Caco-2 (cell line): ENCODE measurements at regions of chrX and their contacts with region 1.

Region 1: DNA sequence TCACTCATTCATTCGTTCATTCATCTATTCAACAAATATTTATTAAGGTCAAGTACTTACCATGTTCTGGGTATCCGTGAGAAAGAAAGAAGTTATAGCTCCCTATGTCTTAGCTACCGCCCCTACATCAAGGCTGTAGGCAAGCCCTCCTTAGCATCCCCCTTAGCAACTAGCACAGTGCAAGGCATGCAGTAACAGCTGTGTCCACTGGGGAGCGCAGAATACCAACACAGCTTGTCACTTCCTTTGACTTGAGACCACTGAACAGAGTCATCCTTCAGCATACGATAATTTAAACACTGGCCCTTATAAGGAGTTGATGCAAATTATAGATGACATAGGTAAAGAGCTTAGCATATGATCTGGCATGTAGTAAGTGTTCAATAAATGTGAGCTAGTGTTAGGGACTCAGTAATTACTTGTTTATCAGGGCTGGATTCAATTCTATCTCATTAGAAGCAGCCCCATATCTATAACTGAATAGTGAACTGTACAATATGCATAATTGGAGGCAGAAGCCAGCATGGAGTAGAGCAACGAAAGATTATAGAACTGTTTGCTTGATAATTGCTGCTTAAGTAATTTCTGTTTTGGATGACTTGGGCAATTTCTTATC is 8.7 kb downstream of the KIAA1210 start:
- DNase-seq: peak; percentile 42 to 46
- H3K4me3 ChIP-seq: no peak overlapping the region
- H3K4me3 Mint-ChIP-seq: no peak overlapping the region
- H3K27ac Mint-ChIP-seq: no peak overlapping the region
- H3K4me1 ChIP-seq: no peaks in the 10 kb centered on the region
- H3K4me1 Mint-ChIP-seq: no peaks in the 10 kb centered on the region
- H3K27me3 ChIP-seq: no peaks in the 10 kb centered on the region
- H3K27me3 Mint-ChIP-seq: peaks cover 3% of the 10 kb centered on the region
- CTCF ChIP-seq: peak in 1 of 2 experiments; percentile 65

Region 2: GRCh38 chrX:118974088-118974907 is 144.6 kb before region 1 on chrX and contains the start of gene LONRF3:
- CTCF ChIA-PET with region 1: no interaction called
- POLR2A ChIA-PET with region 1: no interaction called
- intact Hi-C with region 1: no loop called
- DNase-seq: peak; percentile 30 to 36
- H3K4me3 ChIP-seq: peak within 1 kb of the TSS; percentile 40
- H3K4me3 Mint-ChIP-seq: peak within 1 kb of the TSS; percentile 87
- H3K27ac Mint-ChIP-seq: no peak within 1 kb of the TSS
- H3K4me1 ChIP-seq: no peaks in the 10 kb centered on the region
- H3K4me1 Mint-ChIP-seq: no peaks in the 10 kb centered on the region
- H3K27me3 ChIP-seq: no peaks in the 10 kb centered on the region; the same call in none of the 2 replicates
- H3K27me3 Mint-ChIP-seq: peaks cover 8% of the 10 kb centered on the region
- CTCF ChIP-seq: no peak
- total RNA-seq, gene LONRF3: 0.65 and 0.84 TPM in 2 replicates

Region 3: GRCh38 chrX:119062750-119063374 is 56.0 kb before region 1 on chrX:
- CTCF ChIA-PET with region 1: no interaction called
- POLR2A ChIA-PET with region 1: no interaction called
- intact Hi-C with region 1: no loop called
- DNase-seq: no peak
- H3K4me3 ChIP-seq: no peak overlapping the region
- H3K4me3 Mint-ChIP-seq: no peak overlapping the region
- H3K27ac Mint-ChIP-seq: no peak overlapping the region
- H3K4me1 ChIP-seq: no peaks in the 10 kb centered on the region
- H3K4me1 Mint-ChIP-seq: no peaks in the 10 kb centered on the region
- H3K27me3 ChIP-seq: no peaks in the 10 kb centered on the region
- H3K27me3 Mint-ChIP-seq: peaks cover 2% of the 10 kb centered on the region
- CTCF ChIP-seq: no peak

Region 4: DNA sequence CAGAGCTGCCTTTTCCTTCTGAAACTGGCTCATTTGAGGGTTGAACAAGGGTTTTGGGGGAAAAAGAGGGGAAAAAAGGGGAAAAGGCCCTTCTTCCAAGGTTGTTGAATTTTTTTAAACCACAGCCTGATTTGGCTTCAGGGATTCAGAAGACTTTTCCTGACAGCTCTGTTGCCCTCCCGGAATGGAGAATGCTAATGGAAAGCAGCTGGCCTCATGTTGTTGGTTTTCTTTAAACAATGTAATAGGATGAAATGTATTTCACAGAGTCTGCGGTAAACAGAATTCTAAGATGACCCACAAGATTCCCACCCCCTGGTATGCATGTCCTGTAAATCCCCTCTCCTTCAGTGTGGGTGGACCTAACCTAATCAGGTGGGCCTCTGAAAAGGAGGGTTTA is 12.0 kb after region 1 on chrX:
- CTCF ChIA-PET with region 1: no interaction called
- POLR2A ChIA-PET with region 1: no interaction called
- intact Hi-C with region 1: no loop called
- DNase-seq: no peak
- H3K4me3 ChIP-seq: no peak overlapping the region
- H3K4me3 Mint-ChIP-seq: no peak overlapping the region
- H3K27ac Mint-ChIP-seq: no peak overlapping the region
- H3K4me1 ChIP-seq: no peaks in the 10 kb centered on the region
- H3K4me1 Mint-ChIP-seq: peaks cover 7% of the 10 kb centered on the region
- H3K27me3 ChIP-seq: no peaks in the 10 kb centered on the region
- H3K27me3 Mint-ChIP-seq: peaks cover 10% of the 10 kb centered on the region
- CTCF ChIP-seq: no peak

Region 5: DNA sequence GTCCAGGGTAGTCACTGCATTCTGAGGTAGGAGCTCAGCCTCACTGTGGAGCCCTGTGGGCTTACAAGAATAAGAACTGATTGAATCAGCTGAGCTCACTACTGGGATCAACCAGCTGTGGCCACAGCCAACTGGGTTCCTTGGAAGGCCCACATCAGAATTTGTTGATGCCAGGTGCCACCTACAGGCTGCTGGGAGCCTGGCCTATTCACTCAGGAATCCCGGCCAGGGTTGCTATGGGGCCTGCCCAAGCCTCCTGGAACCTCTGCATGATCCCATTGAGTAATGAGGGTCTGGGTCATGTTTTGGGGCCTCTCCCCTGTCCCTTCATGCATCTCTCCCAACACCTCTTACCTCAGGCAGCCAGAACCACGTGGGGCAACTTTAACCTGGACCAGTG is 62.6 kb after region 1 on chrX:
- CTCF ChIA-PET with region 1: interaction called, 3 read pairs
- POLR2A ChIA-PET with region 1: no interaction called
- intact Hi-C with region 1: loop called (anchors 2 kb)
- DNase-seq: peak; percentile 34 to 36
- H3K4me3 ChIP-seq: no peak overlapping the region
- H3K4me3 Mint-ChIP-seq: no peak overlapping the region
- H3K27ac Mint-ChIP-seq: no peak overlapping the region
- H3K4me1 ChIP-seq: no peaks in the 10 kb centered on the region
- H3K4me1 Mint-ChIP-seq: no peaks in the 10 kb centered on the region
- H3K27me3 ChIP-seq: no peaks in the 10 kb centered on the region
- H3K27me3 Mint-ChIP-seq: peaks cover 8% of the 10 kb centered on the region
- CTCF ChIP-seq: peak; percentile 23 to 52

Region 6: GRCh38 chrX:119194621-119195020 is 75.7 kb after region 1 on chrX:
- CTCF ChIA-PET with region 1: interaction called, 3 read pairs
- POLR2A ChIA-PET with region 1: no interaction called
- intact Hi-C with region 1: loop called (anchors 1 kb)
- DNase-seq: no peak
- H3K4me3 ChIP-seq: no peak overlapping the region
- H3K4me3 Mint-ChIP-seq: no peak overlapping the region
- H3K27ac Mint-ChIP-seq: no peak overlapping the region
- H3K4me1 ChIP-seq: no peaks in the 10 kb centered on the region
- H3K4me1 Mint-ChIP-seq: no peaks in the 10 kb centered on the region
- H3K27me3 ChIP-seq: no peaks in the 10 kb centered on the region
- H3K27me3 Mint-ChIP-seq: peaks cover 9% of the 10 kb centered on the region
- CTCF ChIP-seq: peak; percentile 21 to 26

Region 7: DNA sequence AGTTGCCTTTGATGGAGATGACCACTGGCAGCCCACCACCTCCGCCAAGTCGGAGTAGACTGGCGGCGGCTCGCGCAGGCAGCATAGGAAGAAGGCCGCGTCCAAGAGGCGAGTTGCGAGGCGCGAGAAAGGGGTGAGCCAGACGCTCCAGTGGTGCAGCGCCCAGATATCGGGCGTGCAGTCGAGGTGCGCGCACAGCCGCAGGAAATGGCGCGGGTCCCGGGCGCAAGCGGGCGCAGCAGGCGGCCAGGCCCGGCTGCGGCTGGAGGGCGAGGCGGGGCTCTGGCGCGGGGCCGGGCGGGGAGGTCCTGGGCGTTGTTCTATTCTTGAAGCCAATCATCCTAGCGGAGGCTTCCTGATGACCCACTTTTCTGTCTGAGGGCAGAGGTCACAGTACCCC is 104.0 kb after region 1 on chrX:
- CTCF ChIA-PET with region 1: no interaction called
- POLR2A ChIA-PET with region 1: no interaction called
- intact Hi-C with region 1: loop called (anchors 1 kb)
- DNase-seq: no peak
- H3K4me3 ChIP-seq: no peak overlapping the region
- H3K4me3 Mint-ChIP-seq: no peak overlapping the region
- H3K27ac Mint-ChIP-seq: no peak overlapping the region
- H3K4me1 ChIP-seq: no peaks in the 10 kb centered on the region
- H3K4me1 Mint-ChIP-seq: peaks cover 7% of the 10 kb centered on the region
- H3K27me3 ChIP-seq: no peaks in the 10 kb centered on the region
- H3K27me3 Mint-ChIP-seq: peaks cover 15% of the 10 kb centered on the region
- CTCF ChIP-seq: no peak

Region 8: GRCh38 chrX:119266364-119266995 is 147.6 kb after region 1 on chrX:
- CTCF ChIA-PET with region 1: no interaction called
- POLR2A ChIA-PET with region 1: no interaction called
- intact Hi-C with region 1: loop called (anchors 2 kb)
- DNase-seq: peak in 1 of 2 experiments; percentile 4
- H3K4me3 ChIP-seq: no peak overlapping the region
- H3K4me3 Mint-ChIP-seq: no peak overlapping the region
- H3K27ac Mint-ChIP-seq: no peak overlapping the region
- H3K4me1 ChIP-seq: no peaks in the 10 kb centered on the region
- H3K4me1 Mint-ChIP-seq: no peaks in the 10 kb centered on the region
- H3K27me3 ChIP-seq: no peaks in the 10 kb centered on the region
- H3K27me3 Mint-ChIP-seq: peaks cover 2% of the 10 kb centered on the region
- CTCF ChIP-seq: peak; percentile 46 to 75

Region 9: DNA sequence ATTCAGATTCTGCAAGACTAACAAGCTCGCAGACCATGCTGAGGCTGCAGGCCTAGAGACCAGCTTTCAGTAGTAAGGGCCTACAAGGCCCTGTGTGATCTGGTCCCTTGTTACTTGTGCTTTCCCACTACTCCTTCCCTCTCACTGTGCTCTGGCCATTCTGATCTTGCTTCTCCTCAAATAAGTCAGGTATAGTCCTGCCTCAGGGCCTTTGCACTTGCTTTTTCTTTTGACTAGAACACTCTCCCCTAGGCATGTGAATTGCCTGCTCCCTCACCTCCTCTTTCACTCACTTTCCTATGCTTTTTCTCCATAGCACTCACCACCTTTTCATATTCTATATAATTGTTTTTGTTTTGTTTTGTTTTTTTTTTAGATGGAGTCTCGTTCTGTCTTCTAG is 799.0 kb after region 1 on chrX:
- CTCF ChIA-PET with region 1: no interaction called
- POLR2A ChIA-PET with region 1: no interaction called
- intact Hi-C with region 1: no loop called
- DNase-seq: no peak
- H3K4me3 ChIP-seq: no peak overlapping the region
- H3K4me3 Mint-ChIP-seq: no peak overlapping the region
- H3K27ac Mint-ChIP-seq: no peak overlapping the region
- H3K4me1 ChIP-seq: no peaks in the 10 kb centered on the region
- H3K4me1 Mint-ChIP-seq: no peaks in the 10 kb centered on the region
- H3K27me3 ChIP-seq: no peaks in the 10 kb centered on the region
- H3K27me3 Mint-ChIP-seq: no peaks in the 10 kb centered on the region
- CTCF ChIP-seq: no peak